ENCODE measurements at regions of chr14 and their contacts with region 1.

Region 1: DNA sequence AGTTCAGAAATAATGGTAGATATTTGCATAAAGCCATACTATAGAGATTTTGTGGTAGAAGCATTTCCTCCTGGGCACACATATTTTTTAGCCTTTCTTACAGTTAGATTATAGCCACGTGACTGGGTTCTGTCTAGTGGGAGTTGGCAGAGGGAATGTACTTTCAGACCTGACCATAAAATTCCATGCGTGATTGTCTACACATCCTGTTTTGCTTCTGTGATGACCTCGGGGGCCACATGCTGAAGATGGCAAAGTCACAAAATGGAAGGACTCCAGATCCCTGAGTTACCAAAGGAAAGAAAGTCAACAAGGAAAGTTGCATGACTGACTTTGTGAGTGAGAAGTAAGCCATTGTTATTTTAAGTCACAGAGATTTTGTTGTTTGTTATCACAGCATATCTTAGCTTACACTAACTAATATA is 14.6 kb upstream of the MIA2 start:
- DNase-seq: peak; percentile 92
- ATAC-seq: peak; percentile 48
- H3K4me3 ChIP-seq: no peak overlapping the region
- H3K27ac ChIP-seq: peak overlapping the region; percentile 91
- H3K4me1 ChIP-seq: peaks cover 41% of the 10 kb centered on the region
- H3K27me3 ChIP-seq: no peaks in the 10 kb centered on the region
- CTCF ChIP-seq: no peak

Region 2: DNA sequence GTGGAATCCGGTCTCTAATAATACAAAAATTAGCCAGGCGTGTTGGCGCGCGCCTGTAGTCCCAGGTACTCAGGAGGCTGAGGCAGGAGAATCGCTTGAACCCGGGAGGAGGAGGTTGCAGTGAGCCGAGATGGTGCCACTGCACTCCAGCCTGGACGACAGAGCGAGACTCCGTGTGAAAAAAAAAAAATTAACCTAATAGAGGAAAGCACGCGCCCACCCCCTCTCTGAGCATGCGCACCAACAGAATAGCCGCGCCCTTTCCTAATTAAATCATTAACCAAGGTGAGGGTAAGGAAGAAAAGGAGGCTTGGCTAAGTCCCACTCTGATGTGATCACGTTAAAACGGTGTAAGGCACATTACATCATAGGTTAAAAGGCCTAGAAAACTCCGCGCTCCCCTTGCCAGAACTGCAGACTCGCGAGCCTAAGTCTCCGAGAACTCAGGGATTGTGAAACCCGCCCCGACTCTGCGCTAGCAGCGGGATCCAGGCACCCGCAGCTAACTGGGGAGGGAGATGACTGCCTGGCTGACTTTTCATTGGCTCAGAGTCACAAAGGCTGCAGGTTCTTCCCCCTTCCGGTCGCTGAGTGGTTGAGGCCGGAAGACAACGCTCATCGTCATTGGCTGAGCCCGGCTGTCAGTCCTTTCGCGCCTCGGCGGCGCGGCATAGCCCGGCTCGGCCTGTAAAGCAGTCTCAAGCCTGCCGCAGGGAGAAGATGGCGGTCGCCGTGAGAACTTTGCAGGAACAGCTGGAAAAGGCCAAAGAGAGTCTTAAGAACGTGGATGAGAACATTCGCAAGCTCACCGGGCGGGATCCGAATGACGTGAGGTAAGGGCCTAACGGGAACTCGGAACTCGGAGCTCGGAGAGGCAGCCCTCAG is 44.3 kb before region 1 on chr14 and contains the start of gene PNN:
- CTCF ChIA-PET with region 1: interaction called, 5 read pairs
- POLR2A ChIA-PET with region 1: interaction called, 4 read pairs
- intact Hi-C with region 1: loop called (anchors 1 kb)
- DNase-seq: peak; percentile 99
- ATAC-seq: peak; percentile 89
- H3K4me3 ChIP-seq: peak within 1 kb of the TSS; percentile 96
- H3K27ac ChIP-seq: peak within 1 kb of the TSS; percentile 51
- H3K4me1 ChIP-seq: peaks cover 17% of the 10 kb centered on the region
- H3K27me3 ChIP-seq: no peaks in the 10 kb centered on the region
- CTCF ChIP-seq: no peak
- total RNA-seq, gene PNN: 36.7 and 45.6 TPM in 2 replicates

Region 3: GRCh38 chr14:39184628-39185255 is 34.3 kb before region 1 on chr14:
- CTCF ChIA-PET with region 1: no interaction called
- POLR2A ChIA-PET with region 1: no interaction called
- intact Hi-C with region 1: loop called (anchors 2 kb)
- DNase-seq: no peak
- ATAC-seq: no peak
- H3K4me3 ChIP-seq: no peak overlapping the region
- H3K27ac ChIP-seq: no peak overlapping the region
- H3K4me1 ChIP-seq: peaks cover 12% of the 10 kb centered on the region
- H3K27me3 ChIP-seq: no peaks in the 10 kb centered on the region
- CTCF ChIP-seq: no peak

Measured in PC-3 (cell line).